Activated CD8-positive, alpha-beta T cell treated with anti-CD3 and anti-CD28 coated beads, Interleukin-2, amount 10 ng/mL, durations not matched to agents 7 days and 5 days (primary cell): ENCODE measurements at regions of chr7 and their contacts with region 1.

Region 1: GRCh38 chr7:116236020-116236630 is 25.8 kb downstream of the TES start:
- DNase-seq: peak; percentile 67
- ATAC-seq: no peak
- H3K4me3 Mint-ChIP-seq: no peak overlapping the region
- H3K27ac Mint-ChIP-seq: no peak overlapping the region
- H3K4me1 Mint-ChIP-seq: peaks cover 37% of the 10 kb centered on the region
- H3K27me3 Mint-ChIP-seq: no peaks in the 10 kb centered on the region

Region 2: DNA sequence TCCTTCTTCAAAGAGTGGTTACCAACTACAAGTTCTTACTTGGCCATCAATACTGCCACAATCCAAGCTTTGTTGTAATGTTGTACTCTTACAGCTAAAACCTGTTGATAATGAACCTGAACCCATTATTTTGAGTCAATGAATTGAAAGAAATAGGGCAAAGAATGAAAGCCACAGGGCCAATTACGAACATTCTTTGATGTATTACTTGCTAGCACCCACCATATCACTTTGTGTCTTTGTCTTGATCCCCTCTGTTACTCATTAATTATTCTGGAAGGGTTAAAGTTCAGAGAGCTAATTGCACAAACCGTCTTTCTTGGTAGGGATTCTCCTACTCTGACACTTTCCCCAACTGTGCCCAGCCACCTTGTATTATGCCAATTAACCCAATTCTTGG is 152.3 kb before region 1 on chr7:
- CTCF ChIA-PET with region 1: no interaction called
- POLR2A ChIA-PET with region 1: no interaction called
- DNase-seq: no peak
- ATAC-seq: no peak
- H3K4me3 Mint-ChIP-seq: no peak overlapping the region
- H3K27ac Mint-ChIP-seq: no peak overlapping the region
- H3K4me1 Mint-ChIP-seq: no peaks in the 10 kb centered on the region
- H3K27me3 Mint-ChIP-seq: no peaks in the 10 kb centered on the region

Region 3: GRCh38 chr7:116138202-116138801 is 97.8 kb before region 1 on chr7:
- CTCF ChIA-PET with region 1: interaction called, 29 read pairs
- POLR2A ChIA-PET with region 1: no interaction called
- DNase-seq: peak; percentile 64
- ATAC-seq: peak; percentile 92
- H3K4me3 Mint-ChIP-seq: no peak overlapping the region
- H3K27ac Mint-ChIP-seq: no peak overlapping the region
- H3K4me1 Mint-ChIP-seq: peaks cover 34% of the 10 kb centered on the region
- H3K27me3 Mint-ChIP-seq: peaks cover 16% of the 10 kb centered on the region

Region 4: GRCh38 chr7:116173051-116174028 is 62.8 kb before region 1 on chr7:
- CTCF ChIA-PET with region 1: interaction called, 212 read pairs
- POLR2A ChIA-PET with region 1: no interaction called
- DNase-seq: peak; percentile 60
- ATAC-seq: peak; percentile 65
- H3K4me3 Mint-ChIP-seq: no peak overlapping the region
- H3K27ac Mint-ChIP-seq: no peak overlapping the region
- H3K4me1 Mint-ChIP-seq: peaks cover 24% of the 10 kb centered on the region
- H3K27me3 Mint-ChIP-seq: peaks cover 25% of the 10 kb centered on the region

Region 5: GRCh38 chr7:116194115-116194514 is 42.0 kb before region 1 on chr7:
- CTCF ChIA-PET with region 1: interaction called, 14 read pairs
- POLR2A ChIA-PET with region 1: interaction called, 3 read pairs
- DNase-seq: no peak
- ATAC-seq: no peak
- H3K4me3 Mint-ChIP-seq: no peak overlapping the region
- H3K27ac Mint-ChIP-seq: no peak overlapping the region
- H3K4me1 Mint-ChIP-seq: no peaks in the 10 kb centered on the region
- H3K27me3 Mint-ChIP-seq: peaks cover 19% of the 10 kb centered on the region

Region 6: DNA sequence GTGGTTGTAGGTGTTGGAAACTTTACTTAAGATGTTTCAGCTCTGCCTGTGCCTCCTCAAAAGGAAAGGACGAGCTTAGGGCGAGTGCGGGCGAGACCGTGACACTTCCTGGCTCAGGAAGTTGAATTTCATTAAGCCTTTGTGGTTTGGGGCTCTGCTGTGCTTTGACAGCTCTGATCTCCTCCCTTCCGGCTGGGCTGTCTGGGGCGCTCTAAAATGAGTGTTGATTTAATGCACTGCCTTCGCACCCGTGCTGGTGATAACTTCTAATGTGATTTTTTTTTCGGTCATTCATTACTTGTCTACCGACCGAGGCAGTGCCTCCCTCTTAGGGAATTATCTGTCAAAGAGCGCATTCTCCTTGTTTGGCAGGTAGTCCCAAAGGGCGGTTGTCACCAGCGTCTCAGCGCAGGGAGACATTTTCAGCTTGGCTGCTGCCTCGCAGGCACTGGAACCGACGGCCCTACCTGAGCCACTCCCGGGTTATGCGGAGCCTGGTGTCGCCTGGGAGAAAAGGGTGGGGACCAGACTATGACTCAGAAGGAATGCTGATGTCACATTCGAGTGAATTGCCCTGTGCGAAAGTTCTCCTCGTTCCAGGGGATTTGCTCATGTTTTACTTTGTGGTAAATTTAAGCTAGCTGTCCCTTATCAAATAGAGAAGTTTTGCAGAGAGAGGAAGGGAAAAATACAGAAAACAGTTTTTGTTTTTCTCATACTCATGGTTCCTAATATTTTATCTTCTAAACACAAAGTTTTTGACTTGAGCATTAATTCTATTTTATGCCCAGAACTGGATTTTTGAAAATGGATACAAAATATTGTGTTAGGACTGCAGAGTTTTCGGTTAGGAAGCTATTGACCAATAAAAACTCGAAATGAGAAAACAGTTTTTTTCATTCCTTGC is 24.9 kb before region 1 on chr7:
- CTCF ChIA-PET with region 1: interaction called, 37 read pairs
- POLR2A ChIA-PET with region 1: interaction called, 3 read pairs
- DNase-seq: peak; percentile 84
- ATAC-seq: peak; percentile 80
- H3K4me3 Mint-ChIP-seq: peak overlapping the region; percentile 95
- H3K27ac Mint-ChIP-seq: peak overlapping the region; percentile 97
- H3K4me1 Mint-ChIP-seq: peaks cover 49% of the 10 kb centered on the region
- H3K27me3 Mint-ChIP-seq: peaks cover 2% of the 10 kb centered on the region

Region 7: GRCh38 chr7:116224492-116225098 is 11.5 kb before region 1 on chr7:
- CTCF ChIA-PET with region 1: interaction called, 29 read pairs
- POLR2A ChIA-PET with region 1: no interaction called
- DNase-seq: no peak
- ATAC-seq: peak; percentile 32
- H3K4me3 Mint-ChIP-seq: peak overlapping the region; percentile 47
- H3K27ac Mint-ChIP-seq: peak overlapping the region; percentile 54
- H3K4me1 Mint-ChIP-seq: peaks cover 55% of the 10 kb centered on the region
- H3K27me3 Mint-ChIP-seq: no peaks in the 10 kb centered on the region

Region 8: GRCh38 chr7:116258734-116259133 is 22.6 kb after region 1 on chr7:
- CTCF ChIA-PET with region 1: interaction called, 13 read pairs
- POLR2A ChIA-PET with region 1: no interaction called
- DNase-seq: peak; percentile 54
- ATAC-seq: no peak
- H3K4me3 Mint-ChIP-seq: no peak overlapping the region
- H3K27ac Mint-ChIP-seq: no peak overlapping the region
- H3K4me1 Mint-ChIP-seq: peaks cover 8% of the 10 kb centered on the region
- H3K27me3 Mint-ChIP-seq: peaks cover 2% of the 10 kb centered on the region